HEK293 (cell line): ENCODE measurements at regions of chr12 and their contacts with region 1.

Region 1: GRCh38 chr12:48988030-48988649 is 10.0 kb downstream of the WNT1 start:
- H3K4me3 ChIP-seq: no peak overlapping the region
- H3K27ac ChIP-seq: no peak overlapping the region
- H3K4me1 ChIP-seq: no peaks in the 10 kb centered on the region; the same call in 1 of the 2 replicates
- CTCF ChIP-seq: peak; percentile 82

Region 2: GRCh38 chr12:48788854-48789796 is 199.0 kb before region 1 on chr12 and contains the start of gene ADCY6:
- CTCF ChIA-PET with region 1: no interaction called
- POLR2A ChIA-PET with region 1: no interaction called
- H3K4me3 ChIP-seq: peak within 1 kb of the TSS; percentile 77
- H3K27ac ChIP-seq: peak within 1 kb of the TSS; percentile 82
- H3K4me1 ChIP-seq: peaks cover 6% of the 10 kb centered on the region
- CTCF ChIP-seq: no peak

Region 3: DNA sequence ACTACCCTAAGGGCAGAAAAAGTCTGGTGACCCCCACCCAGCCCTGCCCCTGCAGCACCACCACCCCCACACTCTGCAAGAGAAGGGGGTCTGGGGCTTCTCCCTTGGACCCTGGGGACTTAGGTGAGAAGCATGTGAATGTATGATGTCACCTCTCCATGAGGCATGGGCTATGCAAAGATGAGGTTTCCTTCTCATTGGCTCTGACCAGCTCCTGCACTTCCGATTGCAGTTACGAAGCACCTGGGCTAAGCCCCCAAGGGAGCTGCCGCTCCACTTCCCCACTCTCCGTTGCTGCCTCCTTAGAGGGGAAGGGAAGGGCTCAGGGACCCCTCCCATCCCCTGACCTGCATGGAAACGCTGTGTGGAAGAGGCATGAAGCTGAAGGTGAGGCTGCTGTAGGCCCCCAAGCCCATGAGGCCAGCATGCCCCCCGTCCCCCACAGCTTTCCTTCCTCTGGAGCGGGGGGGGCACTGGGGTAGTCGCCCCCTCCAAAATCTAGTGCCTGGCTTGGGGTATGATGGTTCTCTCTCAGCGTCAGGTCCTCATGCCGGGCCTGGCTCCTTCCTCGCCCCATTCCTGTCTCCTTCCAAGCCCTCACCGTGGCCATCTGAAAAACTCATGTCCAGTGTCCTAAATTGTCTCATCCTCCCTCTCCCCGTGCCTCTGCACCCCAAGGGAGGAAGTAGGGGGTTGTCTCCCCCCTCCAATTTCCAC is 130.7 kb before region 1 on chr12:
- CTCF ChIA-PET with region 1: interaction called, 41 read pairs
- POLR2A ChIA-PET with region 1: interaction called, 6 read pairs
- H3K4me3 ChIP-seq: no peak overlapping the region
- H3K27ac ChIP-seq: no peak overlapping the region
- H3K4me1 ChIP-seq: peaks cover 4% of the 10 kb centered on the region
- CTCF ChIP-seq: no peak

Region 4: DNA sequence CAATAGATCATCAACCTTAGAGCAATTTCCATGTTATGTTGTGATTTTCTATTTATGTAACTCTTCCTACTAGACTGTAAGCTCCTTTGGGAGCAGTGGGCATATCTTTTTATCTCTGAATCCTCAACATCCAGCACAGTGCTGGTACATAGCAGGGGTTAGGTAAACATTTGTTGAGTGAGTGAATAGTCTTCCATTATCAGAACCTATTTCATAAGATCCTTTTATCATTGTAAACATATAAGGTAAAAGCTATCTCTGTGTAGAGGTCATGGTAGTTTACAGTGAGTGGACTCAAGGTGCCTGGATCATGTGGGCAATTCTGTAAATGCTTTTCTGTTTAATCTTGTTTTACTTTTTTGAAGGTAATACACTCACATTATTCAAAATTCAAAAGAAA is 77.9 kb before region 1 on chr12:
- CTCF ChIA-PET with region 1: interaction called, 14 read pairs
- POLR2A ChIA-PET with region 1: no interaction called
- H3K4me3 ChIP-seq: no peak overlapping the region
- H3K27ac ChIP-seq: no peak overlapping the region
- H3K4me1 ChIP-seq: no peaks in the 10 kb centered on the region
- CTCF ChIP-seq: no peak

Region 5: DNA sequence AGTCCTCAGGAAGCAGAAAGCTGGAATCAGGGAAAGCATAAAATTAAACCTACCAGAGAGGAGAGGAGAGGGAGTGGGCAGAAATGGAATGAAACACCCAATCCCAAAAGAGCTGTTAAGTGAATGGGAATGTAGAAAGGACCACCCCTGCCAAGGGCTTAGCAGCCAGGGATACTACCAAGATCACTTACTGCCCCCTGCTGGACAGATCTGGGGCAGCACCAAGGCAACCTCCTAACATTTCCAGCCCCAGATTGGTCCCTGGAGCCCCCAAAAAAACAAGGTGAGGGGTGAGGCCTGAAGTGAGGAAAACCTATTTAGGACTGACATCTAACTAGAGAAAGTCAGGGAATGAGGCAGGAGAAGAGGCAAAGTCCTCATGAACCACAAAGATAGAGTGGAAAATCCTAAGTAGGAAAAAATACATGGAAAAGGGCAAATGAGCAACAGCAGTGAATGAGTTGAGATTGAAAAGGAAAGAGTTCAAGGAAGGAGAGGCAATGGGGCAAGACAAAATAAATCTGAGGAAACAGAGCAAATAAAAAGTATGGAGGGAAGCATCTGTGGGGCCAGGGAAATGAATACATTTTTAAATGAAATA is 51.7 kb before region 1 on chr12:
- CTCF ChIA-PET with region 1: interaction called, 41 read pairs
- POLR2A ChIA-PET with region 1: no interaction called
- H3K4me3 ChIP-seq: no peak overlapping the region
- H3K27ac ChIP-seq: no peak overlapping the region
- H3K4me1 ChIP-seq: no peaks in the 10 kb centered on the region
- CTCF ChIP-seq: peak; percentile 67

Region 6: GRCh38 chr12:48969833-48970701 is 18.1 kb before region 1 on chr12:
- CTCF ChIA-PET with region 1: interaction called, 79 read pairs
- POLR2A ChIA-PET with region 1: no interaction called
- H3K4me3 ChIP-seq: no peak overlapping the region
- H3K27ac ChIP-seq: no peak overlapping the region
- H3K4me1 ChIP-seq: peaks cover 9% of the 10 kb centered on the region
- CTCF ChIP-seq: no peak

Region 7: DNA sequence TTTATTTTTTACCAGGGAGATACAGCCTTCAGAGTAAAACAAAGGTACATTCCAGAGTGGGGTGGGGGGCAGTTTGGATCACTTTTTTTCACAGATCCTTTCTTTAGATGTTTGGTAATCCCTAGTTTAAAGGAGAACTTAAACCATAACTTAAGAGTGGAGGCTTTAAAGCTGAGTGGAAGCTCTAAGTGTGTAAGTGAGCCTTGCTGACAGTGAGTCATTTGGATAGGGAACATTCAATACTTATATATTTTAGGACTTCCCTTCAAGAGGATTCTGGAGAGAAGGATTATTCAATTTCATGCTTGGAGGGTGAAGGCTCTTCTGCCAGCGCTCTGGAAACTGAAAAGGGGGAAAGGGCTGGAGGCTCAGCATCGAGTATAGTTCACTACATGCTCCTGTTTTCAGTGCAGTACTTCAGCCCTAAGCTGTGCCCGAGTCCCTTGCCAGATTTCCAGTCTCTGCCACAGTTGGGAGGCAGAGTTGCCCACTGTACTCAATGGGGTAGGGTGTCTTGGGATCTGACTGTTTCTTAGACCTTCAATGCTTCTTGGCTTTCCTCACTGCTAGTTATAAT is 22.0 kb after region 1 on chr12:
- CTCF ChIA-PET with region 1: interaction called, 53 read pairs
- POLR2A ChIA-PET with region 1: interaction called, 3 read pairs
- H3K4me3 ChIP-seq: no peak overlapping the region
- H3K27ac ChIP-seq: no peak overlapping the region
- H3K4me1 ChIP-seq: peaks cover 5% of the 10 kb centered on the region
- CTCF ChIP-seq: no peak